ENCODE measurements at regions of chr4 and their contacts with region 1.

Region 1: DNA sequence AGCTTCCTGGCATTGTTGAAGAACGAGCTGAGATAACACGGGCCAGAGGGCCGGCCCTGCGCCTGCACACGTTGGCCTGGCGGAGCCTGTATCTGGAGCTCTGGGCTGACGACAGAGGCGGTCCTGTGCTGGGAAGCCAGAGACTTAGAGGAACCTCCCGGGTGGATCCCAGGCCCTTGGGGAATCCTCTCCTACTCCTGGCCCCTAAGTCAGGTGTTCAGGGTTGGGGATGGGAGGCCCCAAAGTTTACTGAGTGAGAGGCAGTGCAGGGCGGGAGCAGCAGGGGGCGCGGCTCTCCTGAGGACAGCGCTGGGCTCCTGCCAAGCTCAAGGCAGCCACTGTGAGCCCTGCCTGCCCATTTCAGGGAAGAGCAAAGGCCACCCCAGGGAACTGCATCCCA is 2.5 kb upstream of the HTRA3 start:
- DNase-seq: peak; percentile 69 to 70
- ATAC-seq: peak; percentile 69 to 88
- H3K4me3 ChIP-seq: no peak overlapping the region
- H3K27ac ChIP-seq: peak overlapping the region in 1 of 2 experiments; percentile 52; a peak in 2 of 6 replicates
- H3K4me1 ChIP-seq: peaks cover 16% of the 10 kb centered on the region; the same call in 1 of the 3 replicates
- CTCF ChIP-seq: peak; percentile 58
- EP300 ChIP-seq: no peak
- POLR2A ChIP-seq: no peak
- RAD21 ChIP-seq: peak; percentile 74 to 76

Region 2: GRCh38 chr4:7638984-7639789 is 627.9 kb before region 1 on chr4:
- CTCF ChIA-PET with region 1: no interaction called
- POLR2A ChIA-PET with region 1: no interaction called
- DNase-seq: no peak
- ATAC-seq: no peak
- H3K4me3 ChIP-seq: no peak overlapping the region
- H3K27ac ChIP-seq: no peak overlapping the region
- H3K4me1 ChIP-seq: no peaks in the 10 kb centered on the region
- CTCF ChIP-seq: no peak
- EP300 ChIP-seq: no peak
- POLR2A ChIP-seq: no peak
- RAD21 ChIP-seq: no peak

Region 3: DNA sequence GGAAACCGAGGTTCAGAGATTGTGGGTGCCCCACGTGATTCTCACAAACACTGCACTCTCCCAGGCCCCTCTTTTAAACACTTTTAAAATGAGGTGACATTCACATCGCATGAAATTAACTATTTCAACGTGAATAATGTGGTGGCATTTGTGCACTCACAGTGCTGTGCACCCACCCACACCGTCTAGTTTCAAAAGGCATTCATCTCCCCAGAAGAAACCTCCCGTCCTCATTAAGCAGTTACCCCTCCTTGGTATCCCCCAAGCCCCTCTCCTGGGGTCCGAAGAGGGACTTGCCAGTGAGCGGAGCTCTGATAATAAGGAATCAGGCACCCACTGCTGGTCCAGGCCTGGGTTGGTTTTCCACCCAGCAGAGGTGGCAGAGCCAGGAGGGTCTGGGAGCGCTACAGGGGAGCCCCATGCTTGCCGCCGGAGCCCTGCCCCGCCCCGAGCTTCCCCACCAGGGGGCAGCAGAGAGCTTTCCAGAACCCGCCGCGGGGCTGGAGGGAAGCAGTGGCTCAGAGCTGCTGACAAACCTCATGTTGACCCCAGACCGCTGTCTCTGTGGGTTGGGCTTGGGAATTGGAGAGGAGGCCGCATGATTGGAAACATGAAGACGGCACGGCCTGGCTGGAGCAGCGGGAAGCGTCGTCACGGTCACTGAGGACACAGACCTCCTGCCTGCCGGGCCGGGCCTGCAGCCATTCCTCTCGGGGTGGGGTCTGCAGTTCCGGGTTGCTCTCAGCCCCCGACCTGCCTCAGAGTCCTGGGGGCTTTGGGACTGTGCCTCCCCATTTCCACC is 25.0 kb before region 1 on chr4:
- CTCF ChIA-PET with region 1: interaction called, 39 read pairs
- POLR2A ChIA-PET with region 1: no interaction called
- DNase-seq: peak; percentile 73 to 76
- ATAC-seq: peak; percentile 80 to 92
- H3K4me3 ChIP-seq: no peak overlapping the region
- H3K27ac ChIP-seq: peak overlapping the region; percentile 45 to 82; a peak in 5 of 6 replicates
- H3K4me1 ChIP-seq: peaks cover 20% of the 10 kb centered on the region
- CTCF ChIP-seq: peak; percentile 72
- EP300 ChIP-seq: no peak
- POLR2A ChIP-seq: no peak
- RAD21 ChIP-seq: peak; percentile 86 to 89

Region 4: DNA sequence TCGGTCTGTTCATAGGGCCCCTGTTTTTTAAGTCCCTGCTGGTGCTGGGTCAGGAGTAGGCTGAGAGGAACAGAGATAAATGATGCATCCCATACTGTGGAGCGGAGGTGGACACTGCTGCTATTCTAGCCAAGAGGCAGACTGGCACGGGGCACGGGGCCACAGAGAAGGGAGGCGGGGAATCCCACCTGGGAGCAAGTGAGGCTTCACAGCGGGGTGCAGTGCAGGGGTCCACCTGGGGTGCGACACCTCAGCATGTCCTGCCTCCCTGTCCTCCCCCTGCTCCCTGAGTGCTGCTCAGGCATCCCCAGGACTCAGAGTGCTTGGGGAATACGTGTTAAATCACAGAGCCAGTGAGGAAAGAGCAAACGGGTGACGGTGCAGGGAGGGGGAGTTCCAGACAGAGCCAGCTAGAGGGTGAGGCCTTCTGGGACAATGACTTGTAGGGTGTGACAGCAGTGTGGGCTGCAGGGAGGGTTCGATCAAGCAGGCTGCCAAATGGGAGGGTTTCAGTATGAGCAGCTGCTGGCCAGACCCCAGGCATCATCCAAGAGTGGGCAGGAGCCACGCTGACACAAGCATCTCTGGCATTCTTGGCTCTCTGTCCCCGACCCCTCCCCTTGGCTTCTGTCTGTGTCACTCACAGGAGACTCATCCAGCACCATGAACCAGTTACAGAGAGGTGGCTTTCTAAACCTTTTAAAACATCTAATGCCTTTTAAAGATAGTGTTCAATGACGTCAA is 11.2 kb before region 1 on chr4:
- CTCF ChIA-PET with region 1: interaction called, 15 read pairs
- POLR2A ChIA-PET with region 1: no interaction called
- DNase-seq: peak in 1 of 2 experiments; percentile 56
- ATAC-seq: peak; percentile 51 to 63; a peak in 4 of 6 replicates
- H3K4me3 ChIP-seq: no peak overlapping the region
- H3K27ac ChIP-seq: peak overlapping the region in 1 of 2 experiments; percentile 58; a peak in 1 of 6 replicates
- H3K4me1 ChIP-seq: peaks cover 12% of the 10 kb centered on the region; the same call in 2 of the 3 replicates
- CTCF ChIP-seq: no peak
- EP300 ChIP-seq: no peak
- POLR2A ChIP-seq: no peak
- RAD21 ChIP-seq: no peak

Region 5: DNA sequence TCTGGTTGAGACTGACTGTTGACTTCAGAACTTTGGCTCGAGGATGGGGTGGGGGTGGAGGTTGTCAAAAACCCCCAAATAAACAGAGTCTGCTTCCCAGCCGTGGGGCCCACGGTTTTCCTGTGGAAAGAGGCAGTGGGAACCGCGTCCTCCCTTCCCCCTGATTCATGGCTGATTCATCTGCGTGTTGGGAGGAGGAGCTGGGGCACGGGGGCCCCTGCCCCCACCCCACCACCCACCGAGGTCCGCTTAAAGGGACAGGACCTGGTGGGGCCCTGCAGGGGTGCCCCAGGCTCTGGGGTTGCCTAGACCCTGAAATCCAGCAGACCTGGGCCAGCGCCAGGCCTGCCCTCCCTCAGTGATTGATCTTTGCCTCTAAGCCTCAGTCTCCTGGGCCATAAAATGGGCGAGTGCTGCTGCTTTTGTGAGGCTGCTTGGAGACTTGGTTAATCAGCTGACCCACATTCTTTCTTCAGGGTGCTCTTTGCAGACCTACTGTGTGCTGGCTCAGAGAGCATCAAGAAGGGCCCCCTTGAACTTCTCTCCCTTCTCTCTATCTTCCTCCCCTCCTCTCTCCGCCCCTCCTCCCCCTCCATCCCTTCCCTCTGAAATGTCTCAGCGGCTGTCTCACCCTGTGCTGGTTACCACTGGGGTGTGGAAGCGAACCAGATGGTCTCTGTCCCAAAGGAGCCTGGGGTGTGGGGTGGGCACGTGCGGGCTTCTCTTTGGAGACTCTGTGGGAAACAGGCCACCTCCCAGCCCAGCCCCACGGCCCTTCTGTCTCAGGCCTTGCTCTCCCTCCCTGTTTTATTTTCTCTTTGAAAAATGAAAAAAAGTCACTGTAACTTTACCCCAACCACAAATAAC is 11.6 kb after region 1 on chr4:
- CTCF ChIA-PET with region 1: interaction called, 22 read pairs
- POLR2A ChIA-PET with region 1: no interaction called
- DNase-seq: peak in 1 of 2 experiments; percentile 41
- ATAC-seq: peak in 1 of 2 experiments; percentile 42; a peak in 3 of 6 replicates
- H3K4me3 ChIP-seq: no peak overlapping the region
- H3K27ac ChIP-seq: peak overlapping the region; percentile 75 to 88
- H3K4me1 ChIP-seq: peaks cover 33% of the 10 kb centered on the region
- CTCF ChIP-seq: no peak
- EP300 ChIP-seq: no peak; a peak in 1 of 5 replicates
- POLR2A ChIP-seq: no peak
- RAD21 ChIP-seq: no peak

Region 6: GRCh38 chr4:8336412-8337075 is 69.5 kb after region 1 on chr4:
- CTCF ChIA-PET with region 1: no interaction called
- POLR2A ChIA-PET with region 1: no interaction called
- DNase-seq: no peak
- ATAC-seq: no peak
- H3K4me3 ChIP-seq: no peak overlapping the region
- H3K27ac ChIP-seq: no peak overlapping the region
- H3K4me1 ChIP-seq: no peaks in the 10 kb centered on the region
- CTCF ChIP-seq: no peak
- EP300 ChIP-seq: no peak
- POLR2A ChIP-seq: no peak
- RAD21 ChIP-seq: no peak

Region 7: GRCh38 chr4:8391972-8392371 is 124.9 kb after region 1 on chr4:
- CTCF ChIA-PET with region 1: interaction called, 33 read pairs
- POLR2A ChIA-PET with region 1: no interaction called
- DNase-seq: no peak
- ATAC-seq: no peak
- H3K4me3 ChIP-seq: no peak overlapping the region
- H3K27ac ChIP-seq: peak overlapping the region in 1 of 2 experiments; percentile 21; a peak in 1 of 6 replicates
- H3K4me1 ChIP-seq: peaks cover 28% of the 10 kb centered on the region
- CTCF ChIP-seq: no peak
- EP300 ChIP-seq: no peak
- POLR2A ChIP-seq: no peak
- RAD21 ChIP-seq: no peak

Region 8: GRCh38 chr4:8410641-8411271 is 143.7 kb after region 1 on chr4:
- CTCF ChIA-PET with region 1: interaction called, 88 read pairs
- POLR2A ChIA-PET with region 1: no interaction called
- DNase-seq: peak; percentile 57 to 80
- ATAC-seq: peak; percentile 91 to 93
- H3K4me3 ChIP-seq: no peak overlapping the region
- H3K27ac ChIP-seq: no peak overlapping the region
- H3K4me1 ChIP-seq: 0 out of 3 replicates have a peak, but pooled peaks cover 6% of the 10 kb centered on the region
- CTCF ChIP-seq: peak; percentile 35
- EP300 ChIP-seq: no peak
- POLR2A ChIP-seq: no peak
- RAD21 ChIP-seq: peak; percentile 47 to 59